ENCODE measurements at regions of chr10 and their contacts with region 1.

Region 1: GRCh38 chr10:89426230-89426868 is 12.0 kb downstream of the IFIT5 start:
- DNase-seq: no peak

Region 2: GRCh38 chr10:89563861-89564478 is 137.6 kb after region 1 on chr10:
- intact Hi-C with region 1: loop called (anchors 2 kb)
- DNase-seq: peak in 1 of 10 donors; percentile 19

Region 3: GRCh38 chr10:89643431-89644331 is 217.3 kb after region 1 on chr10:
- intact Hi-C with region 1: loop called (anchors 10 kb)
- DNase-seq: peak; percentile 70 to 96 (median 80)

Region 4: DNA sequence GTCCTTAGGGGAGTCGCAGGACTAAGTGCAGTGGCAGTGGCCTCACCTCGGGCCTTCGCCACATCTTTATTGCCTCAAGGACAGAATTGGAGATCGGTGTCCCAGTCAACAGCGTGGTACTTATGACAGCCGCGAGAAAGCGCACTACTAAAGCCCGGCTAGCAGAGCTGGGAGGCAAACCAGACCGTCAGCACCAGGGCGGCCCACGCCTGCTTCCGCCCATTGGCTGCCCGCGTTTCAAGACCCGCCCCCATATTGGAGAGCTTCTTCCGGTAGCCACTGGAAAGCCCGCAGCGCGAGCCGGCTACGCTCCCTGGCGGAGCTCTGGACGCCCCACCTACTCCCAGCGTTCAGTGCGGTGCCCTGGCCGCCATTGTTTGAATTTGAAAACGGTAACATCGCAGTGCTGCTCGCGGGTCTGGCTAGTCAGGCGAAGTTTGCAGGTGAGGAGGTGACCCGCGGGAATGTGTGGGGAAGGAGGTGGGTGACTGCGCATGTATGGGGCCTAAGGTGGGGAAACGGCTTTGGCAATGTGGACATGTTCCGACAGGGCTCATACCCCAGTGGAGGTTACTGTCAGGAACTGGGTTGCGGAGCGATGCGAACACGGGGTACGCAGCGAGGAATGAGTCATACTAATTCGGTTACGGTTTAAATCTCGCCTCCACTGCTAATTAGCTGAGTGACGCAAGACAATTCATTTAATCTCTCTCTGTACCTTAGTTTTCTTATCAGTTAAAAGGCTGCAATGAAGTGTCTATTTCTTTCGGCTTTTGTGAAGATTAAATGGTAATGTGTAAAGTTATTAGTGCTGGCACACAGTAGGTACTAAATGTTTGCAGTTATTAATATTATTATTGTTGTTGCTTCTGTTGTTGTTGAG is 275.1 kb after region 1 on chr10 and contains the start of gene KIF20B:
- intact Hi-C with region 1: loop called (anchors 5 kb)
- DNase-seq: peak; percentile 94 to 99 (median 96)

Region 5: GRCh38 chr10:90871766-90872647 is 1445.7 kb after region 1 on chr10 and contains the start of gene RPP30:
- intact Hi-C with region 1: loop called (anchors 5 kb)
- DNase-seq: peak; percentile 84 to 99 (median 89)

Measured in posterior cingulate gyrus (tissue), 11 donors.